ENCODE measurements at regions of chr19 and their contacts with region 1.

Region 1: DNA sequence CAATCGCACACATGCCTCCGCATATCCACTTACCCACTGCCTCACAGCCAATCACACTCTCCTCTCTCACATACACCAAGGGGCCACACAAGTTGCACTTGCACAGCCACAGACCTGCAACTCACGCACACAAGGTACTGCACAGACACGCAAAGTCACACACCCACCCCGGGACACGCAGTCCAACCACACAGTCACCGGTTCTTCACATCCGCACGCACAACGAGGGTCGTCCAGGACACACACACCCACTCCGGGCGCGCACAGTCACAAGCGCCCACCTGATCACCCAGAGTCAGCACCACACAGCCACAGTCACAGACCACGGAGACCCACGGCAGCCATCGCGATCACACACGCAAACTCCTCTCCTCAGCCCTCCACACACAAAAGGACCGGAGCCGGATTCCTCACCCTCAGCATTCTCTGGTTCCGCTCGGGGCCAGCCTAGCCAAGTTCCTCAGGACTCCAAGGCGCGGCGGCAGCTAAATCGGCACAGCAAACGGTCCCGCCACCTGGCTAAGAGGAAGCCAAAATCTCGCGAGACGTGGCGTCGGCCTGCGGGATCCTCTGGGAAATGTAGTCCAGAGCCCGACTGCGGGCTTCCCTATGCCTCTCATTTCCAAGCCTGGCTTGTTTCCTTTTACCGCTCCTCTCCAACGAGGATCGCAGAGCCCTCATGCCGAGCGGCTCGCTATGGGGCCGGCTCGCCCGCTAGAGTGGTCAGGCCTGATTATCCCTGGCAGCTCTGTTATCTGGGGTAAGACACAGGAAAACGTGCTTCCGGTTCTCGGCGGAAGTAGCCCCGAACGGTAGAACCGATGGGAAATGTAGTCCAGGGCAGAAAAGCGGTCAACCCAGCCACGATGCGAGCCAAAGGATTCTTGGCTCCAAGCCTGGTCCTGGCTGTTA is at the start of gene ZNF850:
- DNase-seq: peak; percentile 94
- H3K4me3 Mint-ChIP-seq: peak within 1 kb of the TSS; percentile 98
- H3K27ac Mint-ChIP-seq: peak within 1 kb of the TSS; percentile 92
- H3K4me1 Mint-ChIP-seq: peaks cover 24% of the 10 kb centered on the region
- H3K27me3 Mint-ChIP-seq: no peaks in the 10 kb centered on the region
- total RNA-seq, gene ZNF850: 5.0 to 6.0 TPM

Region 2: DNA sequence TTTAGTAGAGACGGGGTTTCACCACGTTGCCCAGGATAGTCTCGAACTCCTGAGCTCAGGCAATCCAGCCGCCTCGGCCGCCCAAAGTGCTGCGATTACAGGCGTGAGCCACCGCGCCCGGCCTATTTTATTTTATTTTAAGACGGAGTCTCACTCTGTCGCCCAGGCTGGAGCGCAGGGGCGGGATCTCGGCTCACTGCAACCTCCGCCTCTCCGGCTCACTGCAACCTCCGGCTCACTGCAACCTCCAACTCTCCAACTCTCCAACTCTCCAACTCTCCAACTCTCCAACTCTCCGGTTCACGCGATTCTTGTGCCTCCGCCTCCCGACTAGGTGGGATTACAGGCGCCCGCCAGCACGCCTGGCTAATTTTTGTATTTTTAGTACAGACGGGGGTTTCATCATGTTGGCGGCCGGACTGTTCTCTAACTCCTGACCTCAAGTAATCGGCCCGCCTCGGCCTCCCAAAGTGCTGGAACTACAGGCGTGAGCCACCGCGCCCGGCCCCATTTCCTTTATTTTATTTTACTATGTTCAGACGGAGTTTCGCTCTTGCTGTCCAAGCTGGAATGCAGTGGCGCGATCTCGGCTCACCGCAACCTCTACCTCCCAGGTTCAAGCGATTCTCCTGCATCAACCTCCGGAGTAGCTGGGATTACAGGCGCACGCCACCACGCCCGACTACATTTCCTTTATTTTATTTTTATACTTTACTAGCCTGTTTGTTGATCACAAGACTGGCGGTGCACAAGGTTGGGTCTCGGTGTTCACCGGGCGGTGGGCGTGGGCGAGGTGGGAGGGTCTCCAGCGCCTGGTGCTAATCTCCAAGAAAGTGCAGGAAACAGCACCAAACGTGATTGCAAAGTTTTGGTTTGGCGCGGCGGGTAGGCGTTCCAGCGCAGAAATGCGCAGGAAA is 23.8 kb after region 1 on chr19:
- CTCF ChIA-PET with region 1: no interaction called
- POLR2A ChIA-PET with region 1: interaction called, 11 read pairs
- DNase-seq: no peak
- H3K4me3 Mint-ChIP-seq: peak overlapping the region; percentile 83
- H3K27ac Mint-ChIP-seq: peak overlapping the region; percentile 94
- H3K4me1 Mint-ChIP-seq: peaks cover 17% of the 10 kb centered on the region
- H3K27me3 Mint-ChIP-seq: no peaks in the 10 kb centered on the region

Measured in activated CD4-positive, alpha-beta memory T cell treated with anti-CD3 and anti-CD28 coated beads, Interleukin-2, amount 10 ng/mL, durations not matched to agents 7 days and 5 days (primary cell).